ENCODE measurements at regions of chr3 and their contacts with region 1.

Region 1: GRCh38 chr3:196251918-196252317 is 35.6 kb downstream of the SLC51A start:
- DNase-seq: no peak
- ATAC-seq: no peak
- H3K4me3 ChIP-seq: no peak overlapping the region
- H3K4me3 Mint-ChIP-seq: no peak overlapping the region
- H3K27ac ChIP-seq: no peak overlapping the region
- H3K27ac Mint-ChIP-seq: no peak overlapping the region
- H3K4me1 ChIP-seq: no peaks in the 10 kb centered on the region
- H3K4me1 Mint-ChIP-seq: peaks cover 4% of the 10 kb centered on the region
- H3K27me3 ChIP-seq: no peaks in the 10 kb centered on the region
- H3K27me3 Mint-ChIP-seq: no peaks in the 10 kb centered on the region
- CTCF ChIP-seq: no peak

Region 2: DNA sequence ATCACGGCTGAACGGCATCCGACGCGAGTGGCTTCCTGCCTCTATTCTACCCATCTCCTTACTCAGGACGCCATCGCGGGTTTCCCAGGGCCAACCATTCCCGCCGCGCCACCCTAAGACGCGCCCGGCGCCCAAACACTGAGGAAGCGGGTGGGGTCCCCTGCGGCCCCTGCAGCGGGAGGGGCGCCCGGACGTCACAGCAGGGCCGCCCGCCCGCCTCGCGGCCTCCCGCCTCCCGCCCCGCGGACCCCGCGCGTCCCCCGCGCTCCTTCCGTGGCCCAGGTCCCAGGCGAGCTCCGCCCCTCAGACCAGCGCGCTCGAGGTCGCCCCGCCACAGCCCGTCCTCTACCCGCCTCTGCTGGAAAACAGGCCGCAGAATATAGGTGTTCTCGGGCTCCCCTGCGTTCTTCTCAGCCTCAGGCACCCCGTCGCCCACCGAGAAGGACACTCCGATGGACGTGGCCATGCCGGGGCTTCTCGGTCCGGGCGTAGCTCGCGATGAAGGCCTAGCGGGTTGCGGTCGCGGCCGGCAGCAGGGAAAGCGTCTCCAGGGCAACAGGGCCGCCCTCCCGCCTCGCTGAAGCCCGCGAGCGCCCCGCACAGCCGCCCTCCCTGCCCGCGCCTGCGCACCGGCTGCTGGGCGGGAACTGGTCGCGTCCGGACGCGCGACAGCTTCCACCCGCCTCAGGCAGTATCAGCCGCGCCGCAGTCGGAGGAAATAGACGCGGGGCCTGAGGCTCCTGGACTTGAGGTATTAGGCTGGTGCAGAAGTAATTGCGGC is 66.0 kb after region 1 on chr3 and contains the start of gene DYNLT2B:
- CTCF ChIA-PET with region 1: no interaction called
- POLR2A ChIA-PET with region 1: no interaction called
- intact Hi-C with region 1: loop called in 1 of 2 experiments (anchors 5 kb)
- DNase-seq: peak; percentile 73 to 95 (median 84)
- ATAC-seq: peak; percentile 90
- H3K4me3 ChIP-seq: peak within 1 kb of the TSS; percentile 79 to 81
- H3K4me3 Mint-ChIP-seq: peak within 1 kb of the TSS; percentile 92
- H3K27ac ChIP-seq: peak within 1 kb of the TSS; percentile 87 to 89
- H3K27ac Mint-ChIP-seq: peak within 1 kb of the TSS; percentile 96
- H3K4me1 ChIP-seq: no peaks in the 10 kb centered on the region
- H3K4me1 Mint-ChIP-seq: peaks cover 15% of the 10 kb centered on the region
- H3K27me3 ChIP-seq: no peaks in the 10 kb centered on the region
- H3K27me3 Mint-ChIP-seq: no peaks in the 10 kb centered on the region
- CTCF ChIP-seq: no peak
- total RNA-seq, gene DYNLT2B: 1.1 to 3.0 TPM

Region 3: GRCh38 chr3:196471551-196471950 is 219.6 kb after region 1 on chr3:
- CTCF ChIA-PET with region 1: no interaction called
- POLR2A ChIA-PET with region 1: no interaction called
- intact Hi-C with region 1: loop called in 1 of 2 experiments (anchors 10 kb)
- DNase-seq: no peak
- ATAC-seq: no peak
- H3K4me3 ChIP-seq: no peak overlapping the region
- H3K4me3 Mint-ChIP-seq: no peak overlapping the region
- H3K27ac ChIP-seq: no peak overlapping the region
- H3K27ac Mint-ChIP-seq: no peak overlapping the region
- H3K4me1 ChIP-seq: no peaks in the 10 kb centered on the region
- H3K4me1 Mint-ChIP-seq: peaks cover 6% of the 10 kb centered on the region
- H3K27me3 ChIP-seq: no peaks in the 10 kb centered on the region
- H3K27me3 Mint-ChIP-seq: no peaks in the 10 kb centered on the region
- CTCF ChIP-seq: no peak

Region 4: DNA sequence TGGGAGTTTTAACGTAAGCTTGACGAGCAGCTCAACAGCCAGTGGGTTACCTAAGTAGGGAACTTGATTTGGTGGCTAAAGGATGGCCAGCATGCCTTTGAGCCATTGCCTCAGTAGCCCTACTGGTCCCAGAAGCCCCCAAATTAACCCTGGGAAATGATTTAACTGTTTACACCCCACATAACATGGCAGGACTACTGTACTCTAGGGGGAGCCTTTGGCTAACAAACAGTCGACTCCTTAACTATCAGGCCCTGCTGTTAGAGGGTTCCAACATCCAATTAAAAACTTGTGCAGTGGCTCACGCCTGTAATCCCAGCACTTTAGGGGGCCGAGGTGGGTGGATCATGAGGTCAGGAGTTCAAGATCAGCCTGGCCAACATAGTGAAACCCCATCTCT is 272.6 kb after region 1 on chr3:
- CTCF ChIA-PET with region 1: interaction called, 16 read pairs
- POLR2A ChIA-PET with region 1: interaction called, 3 read pairs
- intact Hi-C with region 1: loop called (anchors 1 kb)
- DNase-seq: no peak
- ATAC-seq: no peak
- H3K4me3 ChIP-seq: no peak overlapping the region
- H3K4me3 Mint-ChIP-seq: no peak overlapping the region
- H3K27ac ChIP-seq: no peak overlapping the region
- H3K27ac Mint-ChIP-seq: no peak overlapping the region
- H3K4me1 ChIP-seq: no peaks in the 10 kb centered on the region
- H3K4me1 Mint-ChIP-seq: peaks cover 4% of the 10 kb centered on the region
- H3K27me3 ChIP-seq: no peaks in the 10 kb centered on the region
- H3K27me3 Mint-ChIP-seq: peaks cover 4% of the 10 kb centered on the region
- CTCF ChIP-seq: no peak

Region 5: GRCh38 chr3:196969660-196970546 is 718.0 kb after region 1 on chr3:
- CTCF ChIA-PET with region 1: no interaction called
- POLR2A ChIA-PET with region 1: no interaction called
- intact Hi-C with region 1: loop called in 1 of 2 experiments (anchors 5 kb)
- DNase-seq: peak; percentile 29 to 82 (median 61)
- ATAC-seq: peak; percentile 72
- H3K4me3 ChIP-seq: peak overlapping the region in 1 of 2 experiments; percentile 65
- H3K4me3 Mint-ChIP-seq: peak overlapping the region; percentile 77
- H3K27ac ChIP-seq: no peak overlapping the region
- H3K27ac Mint-ChIP-seq: no peak overlapping the region
- H3K4me1 ChIP-seq: peaks cover 13% of the 10 kb centered on the region
- H3K4me1 Mint-ChIP-seq: peaks cover 4% of the 10 kb centered on the region
- H3K27me3 ChIP-seq: no peaks in the 10 kb centered on the region
- H3K27me3 Mint-ChIP-seq: peaks cover 11% of the 10 kb centered on the region
- CTCF ChIP-seq: peak; percentile 63

Region 6: DNA sequence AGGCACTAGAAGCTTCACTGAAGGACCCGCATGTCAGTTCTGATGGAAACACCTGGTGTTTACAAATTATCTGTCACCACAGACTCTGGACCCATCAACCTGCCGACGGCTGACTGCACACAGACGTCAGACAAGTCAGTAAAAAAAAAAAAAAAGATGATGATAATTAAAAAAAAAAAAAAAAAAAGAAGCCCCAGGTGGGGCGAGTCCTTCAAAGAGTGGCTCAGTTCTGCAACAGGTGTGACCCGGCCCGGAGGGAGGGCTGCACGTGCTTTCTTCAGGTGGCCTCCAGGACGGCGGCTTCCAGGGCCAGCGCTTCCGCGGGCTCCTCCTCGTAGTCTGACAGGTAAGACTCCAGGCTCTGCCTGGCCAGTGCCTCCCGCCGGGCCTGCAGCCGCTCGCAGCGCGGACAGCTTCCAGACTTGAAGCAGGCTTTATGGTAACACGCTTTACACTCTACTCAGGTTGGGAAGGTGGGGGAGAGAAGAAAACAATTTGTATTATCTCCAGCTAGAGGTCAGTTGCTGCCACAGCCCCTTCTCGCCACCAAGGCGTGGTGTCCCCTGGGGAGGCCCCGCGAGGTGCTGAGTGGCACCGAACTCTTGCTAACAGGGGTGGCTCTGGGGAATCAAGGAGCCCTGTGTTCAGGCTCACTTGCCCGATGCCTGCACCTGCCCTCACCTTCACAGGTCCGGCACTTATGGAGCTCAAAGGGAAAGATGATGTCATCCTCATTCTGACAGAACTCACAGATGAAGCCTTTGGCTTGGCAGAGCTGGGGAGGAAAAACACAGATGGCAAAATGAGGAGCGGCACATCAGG is 1423.0 kb after region 1 on chr3:
- CTCF ChIA-PET with region 1: no interaction called
- POLR2A ChIA-PET with region 1: no interaction called
- intact Hi-C with region 1: no loop called
- DNase-seq: peak in 1 of 9 experiments; percentile 17
- ATAC-seq: no peak
- H3K4me3 ChIP-seq: no peak overlapping the region
- H3K4me3 Mint-ChIP-seq: no peak overlapping the region
- H3K27ac ChIP-seq: no peak overlapping the region
- H3K27ac Mint-ChIP-seq: no peak overlapping the region
- H3K4me1 ChIP-seq: no peaks in the 10 kb centered on the region
- H3K4me1 Mint-ChIP-seq: no peaks in the 10 kb centered on the region
- H3K27me3 ChIP-seq: no peaks in the 10 kb centered on the region
- H3K27me3 Mint-ChIP-seq: no peaks in the 10 kb centered on the region
- CTCF ChIP-seq: no peak